MCF 10A (cell line): ENCODE measurements at regions of chr5 and their contacts with region 1.

Region 1: GRCh38 chr5:180784497-180785097 is 18.0 kb downstream of the MGAT1 start:
- DNase-seq: peak; percentile 88
- H3K4me3 Mint-ChIP-seq: no peak overlapping the region
- H3K27ac Mint-ChIP-seq: no peak overlapping the region
- H3K4me1 Mint-ChIP-seq: peaks cover 13% of the 10 kb centered on the region
- H3K27me3 Mint-ChIP-seq: no peaks in the 10 kb centered on the region
- CTCF ChIP-seq: peak; percentile 90

Region 2: GRCh38 chr5:180519098-180519497 is 265.5 kb before region 1 on chr5:
- CTCF ChIA-PET with region 1: no interaction called
- POLR2A ChIA-PET with region 1: no interaction called
- intact Hi-C with region 1: no loop called
- DNase-seq: no peak
- H3K4me3 Mint-ChIP-seq: no peak overlapping the region
- H3K27ac Mint-ChIP-seq: peak overlapping the region; percentile 37
- H3K4me1 Mint-ChIP-seq: peaks cover 55% of the 10 kb centered on the region
- H3K27me3 Mint-ChIP-seq: no peaks in the 10 kb centered on the region
- CTCF ChIP-seq: no peak

Region 3: GRCh38 chr5:180658774-180659564 is 125.6 kb before region 1 on chr5:
- CTCF ChIA-PET with region 1: no interaction called
- POLR2A ChIA-PET with region 1: no interaction called
- intact Hi-C with region 1: no loop called
- DNase-seq: no peak
- H3K4me3 Mint-ChIP-seq: no peak overlapping the region
- H3K27ac Mint-ChIP-seq: no peak overlapping the region
- H3K4me1 Mint-ChIP-seq: no peaks in the 10 kb centered on the region
- H3K27me3 Mint-ChIP-seq: peaks cover 51% of the 10 kb centered on the region
- CTCF ChIP-seq: no peak

Region 4: DNA sequence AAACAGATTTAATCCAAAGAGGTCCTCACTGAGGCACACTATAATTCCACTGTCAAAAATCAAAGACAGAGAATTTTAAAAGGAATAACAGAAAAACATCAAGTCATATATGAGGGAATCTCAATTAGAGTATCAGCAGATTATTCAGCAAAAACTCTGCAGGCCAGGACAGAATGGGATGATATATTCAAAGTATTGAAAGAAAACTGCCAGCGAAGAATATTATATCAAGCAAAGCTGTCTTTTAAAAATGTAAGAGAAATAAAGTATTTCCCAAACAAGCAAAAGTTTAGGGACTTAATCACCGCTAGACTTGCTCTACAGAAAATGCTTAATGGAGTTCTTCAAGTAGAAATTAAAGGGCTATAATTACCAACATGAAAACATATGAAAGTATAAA is 29.0 kb before region 1 on chr5:
- CTCF ChIA-PET with region 1: no interaction called
- POLR2A ChIA-PET with region 1: no interaction called
- intact Hi-C with region 1: no loop called
- DNase-seq: no peak
- H3K4me3 Mint-ChIP-seq: no peak overlapping the region
- H3K27ac Mint-ChIP-seq: no peak overlapping the region
- H3K4me1 Mint-ChIP-seq: no peaks in the 10 kb centered on the region
- H3K27me3 Mint-ChIP-seq: peaks cover 30% of the 10 kb centered on the region
- CTCF ChIP-seq: no peak

Region 5: DNA sequence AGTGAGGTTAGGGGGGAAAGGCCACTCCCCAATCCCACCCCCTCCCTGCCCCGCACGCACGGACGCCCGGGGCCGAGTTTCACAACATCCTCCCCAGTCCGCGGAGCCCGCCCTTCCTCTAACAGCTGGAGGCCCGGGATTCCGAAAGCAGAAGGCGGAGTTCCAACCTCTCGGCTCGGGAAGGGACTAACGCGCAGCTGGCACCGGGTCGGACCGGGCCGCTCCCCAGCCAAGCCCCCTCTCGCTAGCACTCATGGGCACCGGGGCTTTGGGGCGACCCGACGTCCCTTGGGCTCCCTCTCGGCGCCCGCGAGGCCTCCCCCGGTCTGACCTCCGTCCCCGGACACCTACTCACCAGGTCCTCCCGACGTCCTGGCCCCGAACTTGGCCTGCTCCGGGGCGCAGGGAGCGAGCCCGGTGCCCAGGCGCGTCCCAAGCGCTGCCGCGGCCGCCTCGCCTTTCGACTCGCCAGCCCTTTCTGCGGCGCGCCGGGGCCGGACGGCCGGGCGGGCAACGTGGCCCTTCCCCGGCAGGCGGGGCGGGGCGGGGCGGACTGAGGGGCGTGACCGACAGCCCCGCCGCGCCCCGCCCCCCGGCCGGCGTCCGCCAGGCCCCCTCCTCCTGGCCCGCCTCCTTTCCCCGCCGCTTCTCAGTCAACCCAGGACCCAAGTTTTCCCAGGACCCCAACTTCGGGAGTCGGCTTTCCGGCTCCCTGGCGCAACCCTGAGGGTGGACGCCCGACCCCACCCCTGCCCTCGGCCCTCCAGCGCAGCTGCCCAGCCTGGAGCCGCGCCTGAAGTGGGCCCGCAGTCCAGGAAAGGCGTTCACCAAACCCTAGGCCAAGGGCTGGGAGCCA is 18.0 kb after region 1 on chr5 and contains the start of gene MGAT1:
- CTCF ChIA-PET with region 1: interaction called, 14 read pairs
- POLR2A ChIA-PET with region 1: interaction called, 9 read pairs
- intact Hi-C with region 1: loop called (anchors 2 kb)
- DNase-seq: peak; percentile 93
- H3K4me3 Mint-ChIP-seq: peak within 1 kb of the TSS; percentile 75
- H3K27ac Mint-ChIP-seq: peak within 1 kb of the TSS; percentile 78
- H3K4me1 Mint-ChIP-seq: peaks cover 61% of the 10 kb centered on the region
- H3K27me3 Mint-ChIP-seq: no peaks in the 10 kb centered on the region
- CTCF ChIP-seq: no peak
- total RNA-seq, gene MGAT1: 135 and 150 TPM in 2 replicates

Region 6: GRCh38 chr5:181159286-181159829 is 374.8 kb after region 1 on chr5:
- CTCF ChIA-PET with region 1: interaction called, 5 read pairs
- POLR2A ChIA-PET with region 1: interaction called, 3 read pairs
- intact Hi-C with region 1: loop called (anchors 1 kb)
- DNase-seq: peak; percentile 94
- H3K4me3 Mint-ChIP-seq: peak overlapping the region; percentile 66
- H3K27ac Mint-ChIP-seq: peak overlapping the region; percentile 97
- H3K4me1 Mint-ChIP-seq: peaks cover 11% of the 10 kb centered on the region
- H3K27me3 Mint-ChIP-seq: peaks cover 25% of the 10 kb centered on the region
- CTCF ChIP-seq: peak; percentile 97